Astrocyte of the cerebellum (primary cell): ENCODE measurements at regions of chr5 and their contacts with region 1.

Region 1: GRCh38 chr5:134053840-134054338 is 49.1 kb upstream of the VDAC1 start:
- DNase-seq: peak; percentile 32
- H3K4me3 ChIP-seq: no peak overlapping the region
- CTCF ChIP-seq: no peak

Region 2: DNA sequence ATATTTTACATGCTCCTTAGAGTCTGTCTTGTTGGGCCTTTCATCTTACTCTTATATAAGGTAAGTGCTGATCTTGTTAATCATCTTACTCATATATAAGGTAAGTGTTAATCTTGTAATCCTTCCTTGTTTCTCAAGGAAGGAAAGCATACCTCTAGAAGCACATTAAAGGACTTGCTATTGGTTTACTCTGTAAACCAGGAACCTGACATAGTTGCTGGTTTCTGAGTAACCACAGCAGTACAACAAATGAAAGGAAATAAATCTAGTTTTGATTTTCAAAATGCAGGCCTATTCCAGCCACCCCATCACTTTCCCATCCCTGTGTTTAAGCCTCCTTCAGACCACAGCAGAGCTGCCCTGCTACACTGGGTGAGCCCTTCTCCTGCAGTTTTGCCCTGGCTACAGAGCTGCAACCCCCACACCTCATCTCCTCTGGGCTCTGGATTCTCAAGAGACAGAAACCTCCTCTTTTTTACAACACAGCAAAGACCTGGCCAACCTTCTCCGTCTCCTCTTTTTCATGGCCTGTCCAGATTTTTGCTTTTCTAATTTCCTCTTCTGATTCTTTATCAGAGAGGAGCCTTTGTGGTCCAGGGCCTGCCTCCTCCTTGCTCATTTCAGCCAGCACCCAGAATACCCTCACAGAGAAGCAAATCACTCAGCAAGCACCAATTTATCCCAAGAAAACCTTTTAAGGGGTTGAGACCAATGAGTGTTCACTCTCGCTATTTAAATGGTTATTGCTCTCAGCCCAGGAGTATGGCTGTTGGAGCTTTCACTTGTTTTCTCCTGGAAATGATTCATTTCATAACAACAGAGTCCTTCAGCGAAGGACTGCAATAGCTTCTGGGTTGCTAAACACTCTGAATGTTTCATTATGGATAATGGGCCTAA is 544.8 kb before region 1 on chr5:
- in situ Hi-C with region 1: no loop called
- DNase-seq: no peak
- H3K4me3 ChIP-seq: no peak overlapping the region
- CTCF ChIP-seq: no peak

Region 3: DNA sequence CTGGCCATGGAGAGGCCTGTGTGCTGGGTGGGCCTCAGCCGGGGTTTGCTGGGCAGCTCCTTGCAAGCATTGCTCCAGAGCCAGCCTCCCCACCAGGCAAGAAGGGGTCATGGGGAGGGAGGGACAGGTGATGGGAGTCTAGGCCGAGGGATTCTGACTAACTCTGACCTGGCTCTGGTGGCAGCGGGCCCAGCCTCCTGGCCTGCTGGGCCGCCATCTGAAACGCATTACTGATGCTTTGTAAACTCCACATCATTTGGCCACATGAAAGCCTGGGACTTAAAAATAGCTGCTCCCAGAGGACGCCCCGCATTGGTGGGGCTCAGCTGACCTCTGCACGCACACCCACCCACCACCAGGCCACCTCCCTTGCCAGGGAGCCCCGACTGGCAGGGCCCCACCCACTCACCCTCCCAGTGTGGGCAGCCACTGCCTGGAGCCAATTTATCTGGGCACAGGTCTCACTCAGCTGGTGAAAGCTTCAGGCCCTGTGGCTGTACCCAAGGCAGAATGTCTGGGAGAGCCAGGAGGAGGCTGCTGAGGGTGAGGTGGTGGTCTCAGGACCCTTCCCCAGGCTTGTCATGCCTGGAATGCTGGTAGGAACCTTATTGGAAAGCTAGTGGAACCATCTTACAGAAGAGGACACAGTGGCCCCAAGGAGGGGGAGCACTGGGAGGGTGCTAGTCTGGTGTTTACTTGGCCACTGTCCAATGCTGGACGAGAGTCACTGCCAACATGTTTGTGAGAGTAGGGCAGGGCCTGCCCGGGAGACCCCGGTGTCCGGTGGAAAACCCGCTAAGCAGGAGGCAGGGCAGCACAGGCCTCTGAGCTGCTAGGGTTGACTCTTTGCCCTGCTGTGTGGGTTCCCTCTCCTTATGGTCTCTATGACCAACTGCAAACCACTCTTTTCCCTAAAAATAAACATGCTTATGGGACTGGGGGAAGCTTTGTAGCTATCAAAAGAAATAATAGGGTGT is 71.4 kb after region 1 on chr5:
- in situ Hi-C with region 1: loop called (anchors 5 kb)
- DNase-seq: peak; percentile 96
- H3K4me3 ChIP-seq: no peak overlapping the region
- CTCF ChIP-seq: no peak